GM12878 (cell line): ENCODE measurements at regions of chr14 and their contacts with region 1.

Region 1: GRCh38 chr14:20295067-20295466 is 10.7 kb downstream of the TTC5 start:
- DNase-seq: peak; percentile 60
- ATAC-seq: peak; percentile 99
- H3K4me3 ChIP-seq: no peak overlapping the region
- H3K27ac ChIP-seq: no peak overlapping the region
- H3K4me1 ChIP-seq: peaks cover 11% of the 10 kb centered on the region
- H3K27me3 ChIP-seq: no peaks in the 10 kb centered on the region
- CTCF ChIP-seq: no peak
- EP300 ChIP-seq: peak; percentile 55 to 88; a peak in 3 of 4 replicates
- POLR2A ChIP-seq: no peak
- RAD21 ChIP-seq: no peak

Region 2: DNA sequence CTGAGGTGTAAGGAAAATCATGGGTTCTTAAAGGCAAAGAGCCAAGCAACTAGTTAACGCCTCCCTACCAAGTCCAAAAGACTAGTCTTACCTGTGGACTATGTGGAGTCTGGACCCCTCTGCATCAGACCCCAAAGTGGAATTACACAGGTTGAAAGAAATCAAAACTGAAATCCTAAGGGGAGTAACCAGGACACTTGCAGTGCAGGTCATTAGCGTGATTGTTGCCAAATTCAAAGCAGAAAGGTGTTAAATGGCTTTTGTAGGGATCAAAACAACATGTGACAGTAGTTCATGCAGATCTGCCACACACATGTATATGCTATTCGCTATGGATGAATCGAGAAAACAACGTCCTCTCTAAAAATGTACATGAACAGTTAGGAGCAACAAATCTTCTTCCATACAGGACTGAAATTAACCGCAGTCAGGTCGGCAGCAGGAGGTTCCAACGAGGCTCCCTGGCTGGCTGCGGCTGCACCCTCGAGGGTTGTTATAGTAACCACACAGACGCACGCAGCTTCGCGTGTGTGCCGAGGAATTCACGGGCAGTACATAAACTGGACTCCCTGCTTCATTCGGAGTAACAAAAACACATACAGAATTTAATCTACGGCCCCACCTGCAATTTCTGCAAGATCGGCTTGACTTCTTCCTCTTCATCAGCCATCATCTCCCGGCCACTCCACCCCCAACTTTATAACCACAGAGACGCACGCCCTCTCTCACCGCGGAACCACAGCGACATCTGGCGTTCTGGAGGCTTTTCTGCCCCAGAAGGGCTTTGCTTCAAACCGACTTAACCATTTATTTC is 10.4 kb after region 1 on chr14 and contains the start of gene TTC5:
- CTCF ChIA-PET with region 1: interaction called, 12 read pairs
- POLR2A ChIA-PET with region 1: no interaction called
- RAD21 ChIA-PET with region 1: no interaction called
- SMC1A ChIA-PET with region 1: no interaction called
- in situ Hi-C with region 1: no loop called
- intact Hi-C with region 1: no loop called
- DNase-seq: peak; percentile 70
- ATAC-seq: peak; percentile 95
- H3K4me3 ChIP-seq: peak within 1 kb of the TSS; percentile 74
- H3K27ac ChIP-seq: no peak within 1 kb of the TSS
- H3K4me1 ChIP-seq: 0 out of 2 replicates have a peak, but pooled peaks cover 3% of the 10 kb centered on the region
- H3K27me3 ChIP-seq: no peaks in the 10 kb centered on the region
- CTCF ChIP-seq: peak; percentile 87 to 96 (median 96); a peak in 5 of 6 replicates
- EP300 ChIP-seq: peak in 1 of 2 experiments; percentile 43; a peak in 2 of 4 replicates
- POLR2A ChIP-seq: peak; percentile 54
- RAD21 ChIP-seq: peak; percentile 76
- polyA plus RNA-seq, gene TTC5: 6.9 to 7.6 TPM